Activated T-helper 2 cell treated with anti-CD3 and anti-CD28 coated beads, Interferon-gamma antibody, Interleukin-2, Interleukin-4, amounts not matched to agents 10 μg/mL and 5 μg/mL and 100 μg/mL, durations not matched to agents 14 hours and 24 hours and 36 hours (primary cell): ENCODE measurements at regions of chr10 and their contacts with region 1.

Region 1: DNA sequence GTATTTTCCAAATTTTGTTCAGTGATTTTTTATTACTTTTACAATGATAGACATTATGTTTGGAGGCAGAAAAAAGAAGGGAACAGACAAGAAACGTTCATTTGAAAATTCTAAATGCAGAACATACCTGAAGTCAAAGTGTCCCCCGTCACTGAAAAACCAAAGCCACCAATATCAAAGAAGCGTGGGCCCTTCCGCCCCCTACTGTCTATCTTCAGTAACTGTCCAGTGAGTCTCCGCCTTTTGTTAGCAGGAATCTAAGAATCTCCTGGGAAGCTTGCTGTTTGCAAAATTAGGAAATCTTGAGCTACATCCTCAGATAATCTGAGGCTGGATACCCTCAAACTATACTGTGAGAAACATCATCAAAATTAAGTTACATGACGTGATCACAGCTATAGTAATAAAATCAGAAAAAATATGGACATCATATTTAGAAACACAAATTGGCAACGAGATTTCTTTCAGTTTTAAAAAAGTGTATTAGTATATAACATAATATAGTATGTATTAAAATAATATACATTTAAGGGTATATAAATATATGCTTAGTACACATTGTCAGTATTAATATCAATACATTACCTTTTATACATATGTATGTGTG is 169.3 kb upstream of the AKR1E2 start:
- DNase-seq: no peak
- H3K4me3 Mint-ChIP-seq: no peak overlapping the region
- H3K27ac Mint-ChIP-seq: no peak overlapping the region
- H3K4me1 Mint-ChIP-seq: peaks cover 10% of the 10 kb centered on the region
- H3K27me3 Mint-ChIP-seq: peaks cover 20% of the 10 kb centered on the region

Region 2: GRCh38 chr10:3467052-3467951 is 1189.4 kb before region 1 on chr10:
- intact Hi-C with region 1: loop called (anchors 5 kb)
- DNase-seq: no peak
- H3K4me3 Mint-ChIP-seq: peak overlapping the region; percentile 73
- H3K27ac Mint-ChIP-seq: peak overlapping the region; percentile 92
- H3K4me1 Mint-ChIP-seq: peaks cover 63% of the 10 kb centered on the region
- H3K27me3 Mint-ChIP-seq: no peaks in the 10 kb centered on the region

Region 3: GRCh38 chr10:3776796-3777571 is 879.7 kb before region 1 on chr10:
- intact Hi-C with region 1: loop called (anchors 5 kb)
- DNase-seq: peak; percentile 40
- H3K4me3 Mint-ChIP-seq: peak overlapping the region; percentile 54
- H3K27ac Mint-ChIP-seq: peak overlapping the region; percentile 70
- H3K4me1 Mint-ChIP-seq: peaks cover 60% of the 10 kb centered on the region
- H3K27me3 Mint-ChIP-seq: no peaks in the 10 kb centered on the region

Region 4: GRCh38 chr10:3873728-3874461 is 782.8 kb before region 1 on chr10:
- intact Hi-C with region 1: loop called (anchors 10 kb)
- DNase-seq: no peak
- H3K4me3 Mint-ChIP-seq: no peak overlapping the region
- H3K27ac Mint-ChIP-seq: peak overlapping the region; percentile 84
- H3K4me1 Mint-ChIP-seq: peaks cover 55% of the 10 kb centered on the region
- H3K27me3 Mint-ChIP-seq: no peaks in the 10 kb centered on the region

Region 5: DNA sequence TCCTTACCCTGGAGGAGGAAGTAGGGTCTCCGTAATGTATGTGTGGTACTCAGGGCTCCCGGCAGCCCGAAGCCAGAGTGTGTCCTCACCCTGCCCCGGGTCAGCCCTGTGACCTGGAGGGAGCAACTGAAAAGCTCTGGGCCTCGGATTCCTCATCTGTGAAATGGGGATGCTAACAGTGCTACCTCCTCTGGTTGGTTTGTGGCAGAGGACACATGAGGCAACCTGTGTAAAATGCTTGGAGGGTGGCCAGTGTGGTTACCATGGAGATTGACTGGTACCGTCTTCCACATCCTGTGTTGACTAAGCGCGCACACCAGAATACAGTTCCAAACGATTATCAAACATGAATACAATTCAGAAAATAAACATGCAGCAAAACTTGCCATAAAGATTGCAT is 707.8 kb before region 1 on chr10:
- intact Hi-C with region 1: loop called (anchors 5 kb)
- DNase-seq: peak; percentile 71
- H3K4me3 Mint-ChIP-seq: peak overlapping the region; percentile 45
- H3K27ac Mint-ChIP-seq: peak overlapping the region; percentile 79
- H3K4me1 Mint-ChIP-seq: peaks cover 50% of the 10 kb centered on the region
- H3K27me3 Mint-ChIP-seq: no peaks in the 10 kb centered on the region

Region 6: GRCh38 chr10:4241724-4242345 is 414.8 kb before region 1 on chr10:
- intact Hi-C with region 1: loop called (anchors 5 kb)
- DNase-seq: no peak
- H3K4me3 Mint-ChIP-seq: no peak overlapping the region
- H3K27ac Mint-ChIP-seq: no peak overlapping the region
- H3K4me1 Mint-ChIP-seq: peaks cover 33% of the 10 kb centered on the region
- H3K27me3 Mint-ChIP-seq: peaks cover 3% of the 10 kb centered on the region

Region 7: GRCh38 chr10:4353964-4354363 is 302.7 kb before region 1 on chr10:
- intact Hi-C with region 1: loop called (anchors 5 kb)
- DNase-seq: no peak
- H3K4me3 Mint-ChIP-seq: no peak overlapping the region
- H3K27ac Mint-ChIP-seq: peak overlapping the region; percentile 40
- H3K4me1 Mint-ChIP-seq: peaks cover 23% of the 10 kb centered on the region
- H3K27me3 Mint-ChIP-seq: peaks cover 3% of the 10 kb centered on the region

Region 8: DNA sequence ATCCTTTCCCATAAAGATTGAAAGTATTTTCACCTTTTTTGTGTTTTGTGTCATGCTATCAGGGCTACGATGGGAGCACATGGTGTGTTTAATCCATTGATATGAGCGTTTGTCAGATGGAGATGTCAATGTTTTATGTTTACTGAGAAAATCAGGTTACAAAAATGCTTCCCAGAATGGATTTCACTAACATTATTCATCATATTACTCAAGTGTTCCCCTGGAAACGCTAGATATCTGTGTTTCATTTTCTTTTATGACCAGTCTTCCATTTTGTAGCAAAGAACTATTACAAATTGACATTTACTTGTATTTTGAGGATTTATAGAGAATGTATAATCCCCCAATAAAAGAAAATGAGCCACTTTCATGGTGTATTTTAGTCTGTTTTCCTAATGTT is 124.2 kb before region 1 on chr10:
- intact Hi-C with region 1: no loop called
- DNase-seq: no peak
- H3K4me3 Mint-ChIP-seq: no peak overlapping the region
- H3K27ac Mint-ChIP-seq: no peak overlapping the region
- H3K4me1 Mint-ChIP-seq: no peaks in the 10 kb centered on the region
- H3K27me3 Mint-ChIP-seq: peaks cover 9% of the 10 kb centered on the region

Region 9: GRCh38 chr10:5117026-5117425 is 460.3 kb after region 1 on chr10:
- intact Hi-C with region 1: no loop called
- DNase-seq: no peak
- H3K4me3 Mint-ChIP-seq: no peak overlapping the region
- H3K27ac Mint-ChIP-seq: no peak overlapping the region
- H3K4me1 Mint-ChIP-seq: no peaks in the 10 kb centered on the region
- H3K27me3 Mint-ChIP-seq: no peaks in the 10 kb centered on the region